Mammary epithelial cell (primary cell): ENCODE measurements at regions of chr12 and their contacts with region 1.

Region 1: DNA sequence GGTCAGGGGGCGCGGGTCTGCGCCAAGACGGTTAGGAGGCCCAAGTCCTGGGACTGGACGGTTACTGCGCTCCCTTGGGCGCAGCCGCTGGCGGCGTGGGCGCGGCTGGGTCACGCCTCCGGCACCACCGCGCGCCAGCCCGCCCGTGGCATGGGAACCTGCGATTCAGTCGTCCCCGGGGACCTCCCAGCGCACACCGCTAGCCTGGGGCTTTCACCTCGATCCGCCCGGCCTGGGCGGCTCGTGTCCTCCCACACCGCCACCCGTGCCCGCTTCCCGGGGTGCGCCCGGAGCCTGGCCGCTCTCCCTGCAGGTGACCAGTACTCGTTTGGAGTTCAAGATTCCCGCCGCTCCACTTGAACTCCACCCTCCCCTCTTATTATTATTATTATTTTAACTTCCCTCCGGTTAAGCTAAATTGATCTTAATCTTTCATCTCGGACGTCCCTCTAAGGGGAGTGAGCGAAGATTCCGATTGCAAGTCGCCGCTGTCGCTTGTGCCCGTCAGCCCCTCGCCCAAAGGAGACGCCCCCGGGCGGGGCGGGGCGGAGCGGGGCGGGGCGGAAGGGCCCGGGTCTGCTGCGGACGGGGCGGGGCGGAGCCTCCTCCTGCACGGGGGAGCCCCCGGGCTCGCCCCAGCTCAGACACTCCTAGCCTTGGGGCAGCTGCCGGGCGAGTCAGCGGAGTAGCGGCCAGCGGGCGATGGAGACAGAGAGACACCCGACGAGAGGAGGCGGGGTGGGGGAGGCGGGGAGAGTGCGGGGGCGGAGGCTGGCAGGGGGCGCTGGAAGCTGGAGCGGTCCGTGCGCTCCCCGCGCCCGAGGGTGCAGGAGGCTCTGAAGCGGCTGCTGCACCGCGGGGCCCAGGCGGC is at the start of gene KCNMB4:
- DNase-seq: peak; percentile 43
- H3K4me3 ChIP-seq: peak within 1 kb of the TSS; percentile 60 to 97 (median 62)
- H3K27ac ChIP-seq: no peak within 1 kb of the TSS
- H3K4me1 ChIP-seq: peaks cover 19% of the 10 kb centered on the region
- H3K27me3 ChIP-seq: no peaks in the 10 kb centered on the region
- CTCF ChIP-seq: no peak
- total RNA-seq, gene KCNMB4: 0.28 to 1.0 TPM

Region 2: DNA sequence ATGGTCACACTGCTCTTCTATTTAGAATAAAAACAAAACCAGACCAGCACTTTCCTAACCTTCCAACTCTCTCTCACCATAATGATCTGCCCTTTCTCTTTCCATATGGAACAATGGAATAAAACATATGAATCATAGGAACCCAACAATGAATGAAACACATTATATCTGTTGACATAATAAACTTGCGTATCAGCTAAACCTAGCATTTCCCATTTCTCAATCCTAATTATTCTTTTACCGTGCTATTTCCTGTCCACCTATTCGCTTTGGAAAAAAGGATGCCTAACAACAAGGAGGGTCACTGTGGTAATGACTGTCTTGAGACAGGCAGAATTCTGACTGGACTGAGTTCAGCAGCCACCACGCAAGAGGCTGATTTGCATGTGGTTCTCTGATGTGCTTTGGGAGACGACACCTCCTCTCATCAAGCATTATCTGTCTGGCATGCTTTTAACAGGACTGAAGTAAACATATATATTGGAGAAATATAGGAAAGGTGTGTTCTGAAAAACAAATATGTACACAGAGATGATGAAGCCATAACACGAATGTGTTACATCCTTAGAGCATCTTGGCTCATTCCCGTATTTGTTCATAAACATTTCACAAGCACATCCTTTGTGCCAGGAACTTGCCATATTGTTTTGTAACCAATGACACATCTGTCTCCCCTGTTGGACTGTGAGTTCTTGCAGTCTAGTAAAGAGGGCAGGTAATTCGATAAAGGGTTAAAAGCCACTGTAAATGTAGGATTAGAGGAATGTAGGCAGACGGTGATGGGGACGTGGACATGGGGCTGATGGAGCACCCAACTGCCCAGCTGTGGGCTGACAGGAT is 183.7 kb after region 1 on chr12:
- CTCF ChIA-PET with region 1: no interaction called
- dilution Hi-C with region 1: no loop called
- in situ Hi-C with region 1: loop called in 1 of 2 experiments (anchors 25 kb)
- intact Hi-C with region 1: no loop called
- DNase-seq: no peak
- H3K4me3 ChIP-seq: no peak overlapping the region
- H3K27ac ChIP-seq: no peak overlapping the region
- H3K4me1 ChIP-seq: no peaks in the 10 kb centered on the region
- H3K27me3 ChIP-seq: no peaks in the 10 kb centered on the region
- CTCF ChIP-seq: no peak